ENCODE measurements at regions of chr6 and their contacts with region 1.

Region 1: DNA sequence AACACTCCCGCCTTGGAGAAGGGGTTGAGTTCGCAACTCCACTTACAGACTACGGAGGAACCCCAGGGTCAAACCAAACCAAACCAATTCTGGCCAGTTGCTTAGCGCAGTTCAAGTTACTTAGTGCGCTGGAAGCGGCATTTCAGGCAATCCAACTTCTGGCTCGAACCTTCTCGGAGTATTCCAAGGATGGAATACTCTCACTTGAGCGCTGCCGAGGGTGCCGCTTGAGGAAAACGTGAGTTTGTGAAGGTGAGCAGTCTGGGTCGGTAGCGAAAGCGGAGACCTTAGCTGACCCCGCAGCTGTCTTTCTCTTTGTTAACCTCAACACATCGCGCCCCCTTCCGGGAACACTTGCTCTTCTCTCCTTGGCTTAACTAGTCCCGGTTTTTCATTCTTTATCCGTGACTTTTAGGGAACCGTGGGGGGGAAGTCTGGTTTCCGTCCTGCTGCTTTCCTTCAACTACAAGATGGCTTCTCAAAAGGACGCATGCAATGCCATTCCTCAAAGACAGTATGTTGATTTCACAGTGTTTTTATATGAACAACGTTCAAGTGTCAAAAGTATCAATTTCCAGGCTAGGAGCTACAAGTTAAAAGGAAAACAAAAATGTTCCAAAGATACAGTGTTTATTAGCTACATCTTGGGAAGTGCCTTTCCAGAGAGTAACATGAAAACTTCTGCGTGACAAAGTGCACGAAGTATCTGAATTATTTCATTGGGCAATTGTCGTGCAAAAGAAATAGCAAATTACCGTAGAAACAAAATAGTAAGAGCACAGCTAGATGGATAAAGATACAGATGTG is 742 bp upstream of the PNISR start:
- DNase-seq: peak; percentile 67 to 96 (median 74)
- ATAC-seq: peak; percentile 84
- H3K4me3 ChIP-seq: peak overlapping the region; percentile 79
- H3K27ac ChIP-seq: peak overlapping the region; percentile 100
- H3K4me1 ChIP-seq: peaks cover 8 to 20% of the 10 kb centered on the region in 2 experiments; a peak in 4 of 5 replicates
- H3K27me3 ChIP-seq: no peaks in the 10 kb centered on the region
- CTCF ChIP-seq: peak; percentile 53 to 78 (median 75)
- EP300 ChIP-seq: peak; percentile 38; the same call in 1 of the 2 replicates
- POLR2A ChIP-seq: peak; percentile 5
- RAD21 ChIP-seq: peak; percentile 34 to 54

Region 2: GRCh38 chr6:99330159-99330558 is 95.7 kb before region 1 on chr6:
- CTCF ChIA-PET with region 1: interaction called, 8 read pairs
- POLR2A ChIA-PET with region 1: no interaction called
- in situ Hi-C with region 1: no loop called
- intact Hi-C with region 1: loop called (anchors 1 kb)
- DNase-seq: peak; percentile 68 to 79 (median 76)
- ATAC-seq: peak; percentile 92
- H3K4me3 ChIP-seq: no peak overlapping the region
- H3K27ac ChIP-seq: no peak overlapping the region
- H3K4me1 ChIP-seq: no peaks in the 10 kb centered on the region; a peak in 1 of 5 replicates
- H3K27me3 ChIP-seq: peaks cover 6 to 10% of the 10 kb centered on the region in 2 experiments; a peak in 1 of 5 replicates
- CTCF ChIP-seq: peak; percentile 60 to 86 (median 75)
- EP300 ChIP-seq: no peak
- POLR2A ChIP-seq: no peak
- RAD21 ChIP-seq: peak; percentile 54 to 72

Region 3: GRCh38 chr6:99349171-99350141 is 76.4 kb before region 1 on chr6 and contains the start of gene FAXC:
- CTCF ChIA-PET with region 1: no interaction called
- POLR2A ChIA-PET with region 1: interaction called, 5 read pairs
- in situ Hi-C with region 1: no loop called
- intact Hi-C with region 1: loop called (anchors 5 kb)
- DNase-seq: peak; percentile 28 to 41 (median 38)
- ATAC-seq: peak; percentile 84
- H3K4me3 ChIP-seq: peak within 1 kb of the TSS; percentile 45
- H3K27ac ChIP-seq: no peak within 1 kb of the TSS
- H3K4me1 ChIP-seq: peaks cover 0 to 13% of the 10 kb centered on the region in 2 experiments; a peak in 2 of 5 replicates
- H3K27me3 ChIP-seq: peaks cover 18 to 43% of the 10 kb centered on the region in 2 experiments; a peak in 4 of 5 replicates
- CTCF ChIP-seq: peak in 2 of 3 experiments; percentile 5 to 28; a peak in 1 of 6 replicates
- EP300 ChIP-seq: no peak
- POLR2A ChIP-seq: no peak
- RAD21 ChIP-seq: no peak
- polyA plus RNA-seq, gene FAXC: 0.13 to 0.14 TPM

Region 4: DNA sequence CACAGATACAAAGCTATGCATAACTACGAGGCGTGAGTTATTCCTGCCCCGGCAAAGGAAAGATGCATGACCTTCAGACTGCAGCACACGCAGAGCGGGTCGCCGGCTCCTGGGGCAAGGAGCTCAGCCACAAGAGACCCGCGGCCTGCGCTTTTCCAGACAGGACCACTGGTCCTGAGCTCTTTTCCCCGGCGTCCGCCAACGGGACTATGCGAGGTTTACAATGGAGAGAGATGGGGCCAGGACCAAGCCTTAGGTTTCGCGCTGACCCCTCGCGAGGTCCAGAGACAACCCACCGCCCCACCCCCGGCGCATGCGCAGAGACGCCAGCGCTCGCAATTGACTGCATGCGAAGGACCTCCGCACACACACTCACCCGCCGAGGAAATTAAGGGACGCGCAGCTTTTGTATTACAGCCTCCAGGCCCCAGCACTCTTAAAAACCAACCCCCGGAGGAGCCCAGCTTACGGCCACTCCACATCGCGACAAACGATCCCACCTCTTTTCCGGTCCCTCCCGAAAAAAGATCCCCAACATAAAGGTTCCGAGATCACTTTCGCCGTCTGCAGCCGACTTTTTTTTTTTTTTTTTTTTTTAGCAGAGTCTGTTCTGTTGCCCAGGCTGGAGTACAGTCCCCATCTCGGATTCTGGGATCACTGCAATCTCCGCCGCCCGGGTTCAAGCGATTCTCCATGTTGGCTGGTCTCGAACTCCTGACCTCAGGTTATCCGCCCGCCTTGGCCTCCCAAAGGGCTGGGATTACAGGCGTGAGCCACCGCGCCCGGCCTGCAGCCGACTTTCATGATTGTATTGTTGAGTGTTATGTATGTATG is 31.9 kb before region 1 on chr6 and contains the start of gene COQ3:
- CTCF ChIA-PET with region 1: no interaction called
- POLR2A ChIA-PET with region 1: interaction called, 15 read pairs
- in situ Hi-C with region 1: no loop called
- intact Hi-C with region 1: loop called (anchors 1 kb)
- DNase-seq: peak; percentile 84 to 92 (median 90)
- ATAC-seq: peak; percentile 91
- H3K4me3 ChIP-seq: peak within 1 kb of the TSS; percentile 75
- H3K27ac ChIP-seq: peak within 1 kb of the TSS; percentile 94
- H3K4me1 ChIP-seq: peaks cover 3 to 4% of the 10 kb centered on the region in 2 experiments; a peak in 3 of 5 replicates
- H3K27me3 ChIP-seq: no peaks in the 10 kb centered on the region
- CTCF ChIP-seq: no peak
- EP300 ChIP-seq: peak; percentile 28; the same call in 1 of the 2 replicates
- POLR2A ChIP-seq: peak; percentile 89
- RAD21 ChIP-seq: no peak
- polyA plus RNA-seq, gene COQ3: 111 to 137 TPM

Region 5: DNA sequence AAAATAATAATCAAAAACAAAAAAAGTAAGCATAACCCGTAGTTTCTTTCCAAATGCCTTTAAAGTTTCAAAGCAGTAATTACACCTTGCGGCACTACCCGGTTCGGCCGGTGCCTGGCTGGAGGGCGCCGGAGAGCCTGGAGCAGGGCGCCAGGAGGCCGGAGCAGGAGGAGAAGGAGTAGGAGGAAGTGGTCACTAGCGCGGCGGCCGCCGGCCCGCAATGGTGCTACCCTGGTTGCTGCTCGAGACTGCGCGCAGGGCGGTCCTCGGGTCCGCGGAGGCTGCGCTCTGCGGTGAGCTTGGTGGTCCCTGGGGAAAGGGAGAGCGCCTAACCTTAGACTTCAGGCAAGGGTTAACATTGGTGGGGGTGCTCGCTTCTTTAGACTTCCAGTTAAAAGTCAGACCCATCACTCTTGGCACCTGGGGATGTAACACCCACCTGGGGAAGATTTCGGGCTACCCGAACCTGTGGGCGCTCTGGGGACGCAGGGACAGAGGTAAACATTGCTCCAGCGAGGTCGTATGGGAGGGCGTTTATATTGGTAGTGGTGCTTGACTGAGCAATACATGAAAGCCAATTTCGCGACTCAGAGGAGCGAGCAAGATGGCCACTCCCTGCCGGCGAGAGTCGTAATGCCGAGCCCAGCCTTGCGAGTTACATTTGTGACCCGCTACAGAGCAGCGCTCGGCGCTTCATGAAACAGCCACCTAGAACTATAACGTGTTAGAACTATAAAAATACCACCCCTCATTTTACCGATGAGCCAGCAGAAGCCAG is 95.2 kb after region 1 on chr6:
- CTCF ChIA-PET with region 1: no interaction called
- POLR2A ChIA-PET with region 1: interaction called, 4 read pairs
- in situ Hi-C with region 1: no loop called
- intact Hi-C with region 1: loop called (anchors 1 kb)
- DNase-seq: peak; percentile 76 to 91 (median 82)
- ATAC-seq: peak; percentile 94
- H3K4me3 ChIP-seq: peak overlapping the region; percentile 76
- H3K27ac ChIP-seq: peak overlapping the region; percentile 88
- H3K4me1 ChIP-seq: peaks cover 2 to 12% of the 10 kb centered on the region in 2 experiments; a peak in 3 of 5 replicates
- H3K27me3 ChIP-seq: no peaks in the 10 kb centered on the region
- CTCF ChIP-seq: peak; percentile 80 to 86 (median 82)
- EP300 ChIP-seq: no peak
- POLR2A ChIP-seq: peak; percentile 97
- RAD21 ChIP-seq: peak; percentile 40 to 58

Measured in K562 (cell line).